Right ventricle myocardium inferior (tissue), 1 donor: ENCODE measurements at regions of chr5 and their contacts with region 1.

Region 1: GRCh38 chr5:149852641-149853330 is 91.8 kb downstream of the PDE6A start:
- DNase-seq: no peak
- ATAC-seq: peak; percentile 49

Region 2: GRCh38 chr5:149938791-149939358 is 86.1 kb after region 1 on chr5:
- intact Hi-C with region 1: loop called (anchors 5 kb)
- DNase-seq: no peak
- ATAC-seq: no peak

Region 3: DNA sequence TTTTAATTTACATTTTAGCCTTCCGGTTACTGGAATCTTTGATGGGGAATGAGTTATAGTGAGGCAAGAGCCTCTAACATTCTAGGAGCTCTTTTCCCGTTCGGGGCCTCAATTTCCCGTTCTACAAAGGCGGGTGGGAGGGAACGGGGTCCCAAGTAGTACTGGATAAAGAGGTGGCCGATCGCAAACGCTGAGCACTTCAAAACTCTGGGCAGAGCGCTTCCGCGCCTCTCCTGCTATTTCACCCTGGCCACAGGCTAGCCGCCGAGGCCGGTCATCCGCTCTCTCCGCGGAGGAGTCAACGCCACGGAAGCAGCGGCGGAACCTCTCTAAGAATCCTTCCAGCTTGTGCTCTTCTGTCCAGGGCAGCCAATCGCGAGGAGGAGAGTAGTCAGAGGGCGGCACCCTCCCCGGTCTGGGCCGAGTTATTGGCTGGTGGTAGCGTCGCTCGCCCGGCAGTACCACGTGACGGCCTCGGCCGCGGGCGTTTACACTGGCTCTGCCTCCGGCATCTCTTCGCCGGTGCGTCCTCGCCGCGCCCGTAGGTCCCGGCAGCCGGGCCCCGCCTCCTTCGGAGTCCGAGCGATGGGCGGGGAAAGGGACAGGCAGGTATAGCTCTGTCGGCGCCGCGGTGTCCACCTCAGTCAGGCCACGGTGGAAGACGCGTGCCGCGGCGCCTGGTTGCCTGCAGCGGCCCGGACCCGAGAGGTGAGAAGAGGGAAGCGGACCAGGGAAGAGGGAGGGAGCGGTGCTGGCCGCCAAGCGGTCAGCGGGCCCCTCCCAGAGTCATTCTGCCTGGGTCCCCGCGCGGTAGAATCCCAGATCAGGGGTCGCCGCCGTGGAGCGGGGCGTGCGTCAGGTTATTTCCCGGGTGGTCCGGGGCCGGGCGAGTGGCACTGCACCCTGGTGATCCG is 107.7 kb after region 1 on chr5 and contains the start of gene SLC26A2:
- intact Hi-C with region 1: loop called (anchors 5 kb)
- DNase-seq: peak; percentile 98
- ATAC-seq: peak; percentile 100
- total RNA-seq, gene SLC26A2: 4.3 TPM